Activated CD4-positive, alpha-beta memory T cell treated with anti-CD3 and anti-CD28 coated beads for 36 hours (primary cell): ENCODE measurements at regions of chr20 and their contacts with region 1.

Region 1: DNA sequence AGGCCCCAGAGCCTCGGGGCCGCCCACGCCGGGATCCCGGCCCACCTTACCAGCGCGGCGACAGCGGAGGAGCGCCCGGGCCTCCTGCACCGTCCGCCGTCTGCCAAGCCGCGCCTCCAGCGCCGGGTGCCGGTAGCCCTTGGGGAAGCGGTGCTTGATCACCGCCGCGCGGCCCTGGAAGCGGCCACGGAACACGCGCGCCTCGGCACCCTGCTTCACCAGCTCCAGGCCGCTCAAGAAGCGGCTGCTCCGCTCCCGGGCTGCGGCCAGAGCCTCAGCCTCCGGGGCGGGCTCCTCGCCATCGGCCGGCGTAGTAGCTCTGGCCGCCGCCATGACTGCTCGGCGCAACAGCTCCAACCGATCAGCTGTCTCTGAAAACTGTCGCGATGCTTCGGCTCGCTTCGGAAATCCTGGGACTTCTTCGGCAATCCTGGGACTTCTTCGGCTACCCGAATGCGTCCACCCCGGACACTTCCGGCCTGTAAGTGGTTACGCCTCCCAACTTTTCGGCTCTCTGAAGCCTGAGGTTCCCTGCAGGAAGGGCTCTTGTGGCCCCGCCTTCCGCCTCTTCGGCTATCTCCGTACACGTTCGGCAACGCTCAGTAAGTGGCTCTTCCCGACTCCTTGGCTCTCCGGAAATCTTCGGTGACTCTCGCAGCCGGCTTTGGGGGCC is at the start of gene TP53RK:
- DNase-seq: peak; percentile 98
- H3K4me3 Mint-ChIP-seq: peak within 1 kb of the TSS; percentile 96
- H3K27ac Mint-ChIP-seq: peak within 1 kb of the TSS; percentile 97
- H3K4me1 Mint-ChIP-seq: peaks cover 36% of the 10 kb centered on the region
- H3K27me3 Mint-ChIP-seq: no peaks in the 10 kb centered on the region
- total RNA-seq, gene TP53RK: 12.1 to 12.3 TPM

Region 2: DNA sequence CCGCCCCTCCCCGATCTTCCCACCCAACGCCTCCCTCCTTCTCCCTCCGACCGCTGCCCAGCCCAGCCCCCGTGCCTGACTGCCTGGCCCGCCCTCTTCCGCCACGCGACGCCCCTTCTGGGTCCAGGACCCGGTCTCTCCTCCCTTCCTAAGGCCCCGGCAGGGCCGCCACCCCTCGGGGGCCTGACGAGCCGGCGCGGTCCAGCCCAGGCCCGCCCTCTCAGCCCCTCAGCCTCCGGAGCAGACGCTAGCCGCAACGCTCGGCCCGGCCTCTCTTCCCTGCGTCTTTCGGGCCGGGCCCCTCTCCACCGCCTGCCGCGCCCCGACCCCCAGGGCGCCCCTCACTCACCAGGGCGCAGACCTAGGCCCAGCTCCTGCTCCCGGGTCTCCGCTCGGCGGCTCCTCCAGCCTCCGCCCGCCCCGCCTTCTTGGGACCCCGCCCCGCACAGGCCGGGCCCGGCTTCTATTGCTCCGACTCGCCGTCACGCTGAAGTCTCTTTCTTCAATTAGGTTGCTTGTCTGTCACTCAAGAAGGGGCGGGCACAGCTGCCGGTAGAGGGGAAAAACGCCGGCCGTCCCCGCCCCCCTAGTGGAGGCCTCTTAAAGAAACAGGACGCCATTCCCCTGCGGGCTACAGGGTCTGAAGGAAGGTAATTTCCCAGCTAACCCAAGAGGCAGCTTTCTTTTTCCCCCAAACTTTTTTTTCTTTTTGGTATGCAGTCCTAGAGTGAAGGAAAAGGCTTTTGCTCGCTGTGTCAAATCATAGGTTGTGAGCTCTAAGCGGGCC is 282.8 kb before region 1 on chr20 and contains the start of gene ELMO2:
- CTCF ChIA-PET with region 1: interaction called, 3 read pairs
- POLR2A ChIA-PET with region 1: interaction called, 3 read pairs
- intact Hi-C with region 1: loop called (anchors 2 kb)
- DNase-seq: peak; percentile 98
- H3K4me3 Mint-ChIP-seq: peak within 1 kb of the TSS; percentile 90
- H3K27ac Mint-ChIP-seq: peak within 1 kb of the TSS; percentile 92
- H3K4me1 Mint-ChIP-seq: peaks cover 63% of the 10 kb centered on the region
- H3K27me3 Mint-ChIP-seq: no peaks in the 10 kb centered on the region
- total RNA-seq, gene ELMO2: 57.4 to 64.1 TPM

Region 3: DNA sequence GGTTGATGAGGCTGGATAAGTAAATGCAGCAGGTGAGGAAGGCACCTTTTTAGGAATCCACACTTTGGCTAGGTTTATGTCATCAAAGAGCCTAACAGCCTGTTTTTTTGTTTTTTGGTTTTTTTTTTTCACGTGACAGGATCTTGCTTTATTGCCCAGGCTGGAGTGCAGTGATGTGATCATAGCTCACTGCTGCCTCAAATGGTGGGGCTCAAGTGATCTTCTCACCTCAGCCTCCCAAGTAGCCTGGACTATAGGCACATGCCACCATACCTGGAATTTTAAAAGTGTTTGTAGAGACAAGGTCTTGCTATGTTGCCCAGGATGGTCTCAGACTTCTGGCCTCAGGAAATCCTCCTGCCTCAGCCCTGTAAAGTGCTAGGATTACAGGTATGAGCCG is 212.0 kb before region 1 on chr20:
- CTCF ChIA-PET with region 1: no interaction called
- POLR2A ChIA-PET with region 1: no interaction called
- intact Hi-C with region 1: no loop called
- DNase-seq: no peak
- H3K4me3 Mint-ChIP-seq: no peak overlapping the region
- H3K27ac Mint-ChIP-seq: no peak overlapping the region
- H3K4me1 Mint-ChIP-seq: no peaks in the 10 kb centered on the region
- H3K27me3 Mint-ChIP-seq: peaks cover 13% of the 10 kb centered on the region

Region 4: GRCh38 chr20:46607191-46607848 is 81.9 kb before region 1 on chr20:
- CTCF ChIA-PET with region 1: no interaction called
- POLR2A ChIA-PET with region 1: no interaction called
- intact Hi-C with region 1: no loop called
- DNase-seq: no peak
- H3K4me3 Mint-ChIP-seq: no peak overlapping the region
- H3K27ac Mint-ChIP-seq: no peak overlapping the region
- H3K4me1 Mint-ChIP-seq: no peaks in the 10 kb centered on the region
- H3K27me3 Mint-ChIP-seq: no peaks in the 10 kb centered on the region

Region 5: DNA sequence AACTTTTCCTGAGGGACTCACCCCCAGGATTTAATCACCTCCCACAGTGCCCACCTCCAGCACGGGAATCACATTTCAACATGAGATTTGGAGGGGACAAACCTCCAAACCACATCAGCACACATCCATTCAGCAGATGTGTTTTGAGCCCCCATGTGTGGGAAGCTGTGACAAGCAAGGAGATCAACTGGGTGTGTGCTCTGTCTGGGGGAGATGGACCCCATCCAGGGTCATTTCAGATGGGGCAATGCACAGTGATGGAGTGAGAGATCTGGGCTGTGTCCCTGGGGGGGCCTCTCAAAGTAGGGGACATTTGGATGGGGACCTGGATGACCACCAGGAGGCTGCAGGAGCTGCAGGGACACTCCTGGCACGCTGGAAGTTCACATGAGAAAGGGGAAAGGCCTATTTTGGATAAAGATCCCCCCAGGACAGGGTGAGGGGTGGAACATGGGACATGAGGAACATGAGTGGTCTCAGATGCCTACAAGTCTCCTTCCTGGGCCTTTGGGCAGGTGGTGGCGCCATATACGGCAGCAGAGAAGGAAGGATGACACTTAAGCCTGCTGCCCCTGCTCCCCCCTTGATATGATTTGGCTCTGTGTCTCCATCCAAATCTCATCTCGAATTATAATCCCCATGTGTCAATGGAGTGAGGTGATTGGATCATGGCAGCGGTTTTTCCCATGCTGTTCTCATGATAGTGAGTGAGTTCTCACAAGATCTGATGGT is 69.9 kb after region 1 on chr20:
- CTCF ChIA-PET with region 1: no interaction called
- POLR2A ChIA-PET with region 1: no interaction called
- intact Hi-C with region 1: no loop called
- DNase-seq: no peak
- H3K4me3 Mint-ChIP-seq: no peak overlapping the region
- H3K27ac Mint-ChIP-seq: no peak overlapping the region
- H3K4me1 Mint-ChIP-seq: no peaks in the 10 kb centered on the region
- H3K27me3 Mint-ChIP-seq: peaks cover 8% of the 10 kb centered on the region